ENCODE measurements at regions of chr14 and their contacts with region 1.

Region 1: DNA sequence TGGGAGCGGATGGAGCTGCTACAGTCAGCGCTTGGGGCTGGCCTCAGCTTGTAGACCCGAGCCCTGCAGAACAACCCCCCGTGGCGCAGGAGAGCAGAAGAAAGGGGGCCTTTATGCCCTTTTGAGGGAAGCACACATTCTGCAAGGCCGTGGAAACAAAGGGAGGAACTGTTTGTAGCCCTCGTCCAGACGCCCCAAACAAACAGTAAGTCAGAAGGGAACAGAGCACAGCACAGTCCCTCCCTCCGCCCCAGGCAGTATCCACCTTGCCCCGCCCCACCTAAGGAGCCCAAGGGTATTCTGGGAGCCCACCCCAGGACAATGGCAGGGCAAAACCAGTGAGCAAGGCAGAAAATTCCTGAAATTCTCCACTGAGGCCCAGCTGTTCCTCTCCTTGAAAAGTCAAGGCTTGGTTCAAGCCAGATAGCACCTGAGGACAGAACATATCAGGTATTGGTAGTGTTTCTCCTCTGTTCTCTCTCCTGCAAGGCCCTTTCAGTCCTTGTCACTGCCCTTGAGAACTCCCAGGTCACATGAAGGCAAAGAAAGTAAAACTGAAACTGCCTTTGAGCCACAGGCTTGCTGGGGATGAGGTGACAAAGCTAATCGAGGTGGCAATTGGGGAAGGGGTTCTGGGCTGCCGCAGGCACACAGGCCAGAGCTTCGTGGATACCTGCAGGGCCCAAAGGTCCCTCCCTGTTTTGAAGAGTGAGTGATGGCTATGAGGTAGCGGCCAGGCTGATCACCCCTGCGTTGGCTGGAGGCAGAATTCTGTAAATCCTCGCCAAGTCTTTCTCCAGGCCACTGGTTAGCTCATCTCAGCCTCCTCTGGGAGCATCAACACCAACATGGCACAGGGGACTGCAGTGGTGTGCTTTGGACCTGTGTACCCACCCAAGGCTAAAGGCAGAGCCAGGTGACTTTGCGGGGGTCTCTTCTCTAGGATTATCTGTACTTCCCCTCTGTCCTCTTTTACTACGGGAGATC is 499 bp downstream of the DGLUCY start:
- DNase-seq: peak; percentile 84
- ATAC-seq: peak; percentile 84
- H3K4me3 Mint-ChIP-seq: peak overlapping the region; percentile 92
- H3K27ac Mint-ChIP-seq: peak overlapping the region; percentile 92
- H3K4me1 Mint-ChIP-seq: peaks cover 57% of the 10 kb centered on the region
- H3K27me3 Mint-ChIP-seq: no peaks in the 10 kb centered on the region
- CTCF ChIP-seq: no peak

Region 2: GRCh38 chr14:90970167-90970600 is 144.2 kb before region 1 on chr14:
- CTCF ChIA-PET with region 1: interaction called, 4 read pairs
- POLR2A ChIA-PET with region 1: interaction called, 11 read pairs
- intact Hi-C with region 1: no loop called
- DNase-seq: no peak
- ATAC-seq: peak; percentile 85
- H3K4me3 Mint-ChIP-seq: peak overlapping the region; percentile 42
- H3K27ac Mint-ChIP-seq: peak overlapping the region; percentile 89
- H3K4me1 Mint-ChIP-seq: peaks cover 49% of the 10 kb centered on the region
- H3K27me3 Mint-ChIP-seq: no peaks in the 10 kb centered on the region
- CTCF ChIP-seq: no peak

Region 3: DNA sequence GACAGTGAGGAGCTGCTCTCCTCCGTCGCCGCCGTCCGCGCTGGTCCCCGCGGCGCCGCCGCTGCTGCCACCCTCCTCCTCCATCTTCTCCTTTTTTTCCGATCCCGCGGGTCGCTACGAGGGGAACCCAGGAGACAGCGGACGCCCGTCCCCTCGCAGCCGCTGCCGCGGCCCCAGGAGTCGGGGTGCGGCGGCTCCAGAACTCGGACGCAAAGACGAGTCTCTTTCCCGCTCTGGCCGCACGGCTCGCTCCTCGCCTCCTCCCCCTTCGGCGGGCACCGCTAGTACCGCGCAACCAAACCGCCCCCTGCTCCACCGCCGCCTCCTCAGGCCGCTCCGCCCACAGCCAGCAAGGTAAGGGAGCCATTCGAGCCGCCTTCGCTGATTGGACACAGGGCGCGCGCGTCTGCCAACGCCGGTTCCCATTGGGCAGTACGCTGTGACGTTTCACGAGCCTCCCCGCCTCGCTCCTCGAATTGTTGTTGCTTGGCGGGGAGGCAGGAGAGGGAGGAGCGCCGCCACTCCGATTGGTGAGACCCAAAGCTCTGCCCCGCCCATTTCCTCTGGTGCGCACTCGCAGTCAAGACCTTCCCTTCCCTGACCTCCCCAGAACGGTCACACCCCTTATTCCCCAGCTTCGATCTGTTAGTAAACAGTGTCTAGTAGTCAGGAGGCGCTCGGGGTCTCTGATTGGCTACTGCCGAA is 53.9 kb before region 1 on chr14 and contains the start of gene RPS6KA5:
- CTCF ChIA-PET with region 1: interaction called, 36 read pairs
- POLR2A ChIA-PET with region 1: interaction called, 113 read pairs
- intact Hi-C with region 1: no loop called
- DNase-seq: peak; percentile 100
- ATAC-seq: peak; percentile 86
- H3K4me3 Mint-ChIP-seq: peak within 1 kb of the TSS; percentile 77
- H3K27ac Mint-ChIP-seq: peak within 1 kb of the TSS; percentile 58
- H3K4me1 Mint-ChIP-seq: peaks cover 53% of the 10 kb centered on the region
- H3K27me3 Mint-ChIP-seq: no peaks in the 10 kb centered on the region
- CTCF ChIP-seq: no peak
- total RNA-seq, gene RPS6KA5: 12.8 to 12.9 TPM

Region 4: DNA sequence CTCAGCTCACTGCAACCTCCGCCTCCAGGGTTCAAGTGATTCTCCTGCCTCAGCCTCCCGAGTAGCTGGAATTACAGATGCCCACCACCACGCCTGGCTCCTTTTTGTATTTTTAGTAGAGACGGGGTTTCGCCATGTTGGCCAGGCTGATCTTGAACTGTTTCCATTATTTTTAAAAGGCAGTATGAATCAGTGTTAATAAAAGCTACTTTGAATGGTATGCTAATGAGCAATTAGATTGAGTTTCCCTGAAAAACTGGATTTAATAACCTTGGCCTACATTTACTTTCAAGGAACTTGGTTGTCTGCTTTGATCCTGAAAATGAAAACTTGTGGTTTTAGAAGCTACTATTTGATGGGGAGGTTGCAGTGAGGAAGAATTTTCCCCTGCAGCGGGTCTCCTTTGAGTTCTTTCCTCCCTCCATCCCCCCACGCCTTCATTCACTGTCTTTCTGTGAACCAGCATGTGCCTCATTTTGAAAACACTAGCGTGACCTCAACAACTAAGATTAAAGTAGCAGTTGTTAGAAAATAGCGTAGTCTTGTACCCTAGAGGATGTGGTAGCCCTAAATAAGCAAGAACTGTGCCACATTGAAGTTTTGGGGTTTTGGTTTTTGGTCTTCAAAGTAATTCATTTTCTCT is 36.2 kb before region 1 on chr14:
- CTCF ChIA-PET with region 1: interaction called, 9 read pairs
- POLR2A ChIA-PET with region 1: interaction called, 20 read pairs
- intact Hi-C with region 1: no loop called
- DNase-seq: peak; percentile 78
- ATAC-seq: peak; percentile 96
- H3K4me3 Mint-ChIP-seq: no peak overlapping the region
- H3K27ac Mint-ChIP-seq: peak overlapping the region; percentile 81
- H3K4me1 Mint-ChIP-seq: peaks cover 29% of the 10 kb centered on the region
- H3K27me3 Mint-ChIP-seq: no peaks in the 10 kb centered on the region
- CTCF ChIP-seq: no peak

Region 5: DNA sequence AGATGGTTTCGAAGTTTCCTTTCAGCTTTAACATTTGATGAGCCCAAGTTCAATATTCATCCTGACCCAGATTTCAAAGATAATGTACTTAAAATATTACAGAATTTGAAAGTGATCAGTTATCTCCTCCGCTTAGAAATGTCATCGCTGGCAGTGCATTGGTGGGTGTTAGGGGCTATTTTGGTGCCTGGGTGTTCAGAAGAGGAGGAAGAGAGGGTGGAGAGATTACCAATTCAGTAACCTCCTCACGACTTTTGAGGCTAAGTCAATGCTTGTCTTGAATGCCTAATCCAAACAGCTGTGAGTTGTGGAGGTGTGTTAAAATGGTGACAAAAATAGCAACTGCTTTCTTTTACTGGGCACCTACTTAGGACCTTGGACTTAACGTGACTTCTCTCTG is 14.3 kb before region 1 on chr14:
- CTCF ChIA-PET with region 1: interaction called, 4 read pairs
- POLR2A ChIA-PET with region 1: interaction called, 11 read pairs
- intact Hi-C with region 1: no loop called
- DNase-seq: no peak
- ATAC-seq: no peak
- H3K4me3 Mint-ChIP-seq: no peak overlapping the region
- H3K27ac Mint-ChIP-seq: peak overlapping the region; percentile 54
- H3K4me1 Mint-ChIP-seq: peaks cover 4% of the 10 kb centered on the region
- H3K27me3 Mint-ChIP-seq: no peaks in the 10 kb centered on the region
- CTCF ChIP-seq: no peak

Region 6: DNA sequence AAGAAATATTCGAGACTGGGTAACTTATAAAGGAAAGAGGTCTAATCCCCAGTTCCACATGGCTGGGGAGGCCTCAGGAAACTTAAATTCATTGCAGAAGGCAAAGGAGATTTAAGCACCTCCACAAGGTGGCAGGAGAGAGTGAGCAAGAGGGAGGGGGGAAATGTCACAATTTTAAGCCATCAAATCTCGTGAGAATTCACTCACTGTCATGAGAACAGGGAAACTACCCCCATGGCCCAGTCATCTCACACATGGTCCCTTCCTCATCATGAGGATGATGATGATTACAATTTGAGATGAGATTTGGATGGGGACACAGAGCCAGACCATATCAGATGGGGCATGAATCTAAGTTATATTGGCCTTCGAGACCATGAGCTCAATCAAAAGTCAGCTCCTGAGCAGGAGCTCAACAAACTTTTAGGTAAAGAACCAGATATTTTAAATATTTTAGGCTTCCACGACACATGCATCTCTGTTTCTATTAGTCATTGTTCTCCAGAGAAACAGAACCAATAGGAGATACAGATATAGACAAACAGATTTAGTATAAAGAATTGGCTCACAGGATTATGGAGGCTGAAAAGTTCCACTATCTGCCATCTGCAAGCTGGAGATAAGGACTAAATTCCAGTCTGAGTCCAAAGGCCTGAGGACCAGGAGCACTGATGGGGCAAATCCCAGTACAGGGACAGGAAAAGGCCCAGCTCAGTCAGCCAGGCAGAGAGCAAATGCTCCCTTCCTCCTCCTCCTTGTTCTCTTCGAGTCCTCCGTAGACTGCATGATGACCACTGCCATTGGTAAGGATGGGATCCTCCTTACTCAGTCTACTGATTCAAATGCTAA is 24.4 kb after region 1 on chr14:
- CTCF ChIA-PET with region 1: interaction called, 19 read pairs
- POLR2A ChIA-PET with region 1: interaction called, 8 read pairs
- intact Hi-C with region 1: no loop called
- DNase-seq: peak; percentile 75
- ATAC-seq: peak; percentile 80
- H3K4me3 Mint-ChIP-seq: no peak overlapping the region
- H3K27ac Mint-ChIP-seq: peak overlapping the region; percentile 55
- H3K4me1 Mint-ChIP-seq: peaks cover 44% of the 10 kb centered on the region
- H3K27me3 Mint-ChIP-seq: no peaks in the 10 kb centered on the region
- CTCF ChIP-seq: peak; percentile 83